ENCODE measurements at regions of chr9 and their contacts with region 1.

Region 1: GRCh38 chr9:9820436-9820835 is 792.4 kb downstream of the PTPRD start:
- DNase-seq: no peak
- ATAC-seq: no peak
- H3K4me3 ChIP-seq: no peak overlapping the region
- H3K4me3 Mint-ChIP-seq: no peak overlapping the region
- H3K27ac ChIP-seq: no peak overlapping the region
- H3K27ac Mint-ChIP-seq: no peak overlapping the region
- H3K4me1 ChIP-seq: no peaks in the 10 kb centered on the region
- H3K4me1 Mint-ChIP-seq: no peaks in the 10 kb centered on the region
- H3K27me3 ChIP-seq: no peaks in the 10 kb centered on the region
- H3K27me3 Mint-ChIP-seq: no peaks in the 10 kb centered on the region
- CTCF ChIP-seq: no peak

Region 2: DNA sequence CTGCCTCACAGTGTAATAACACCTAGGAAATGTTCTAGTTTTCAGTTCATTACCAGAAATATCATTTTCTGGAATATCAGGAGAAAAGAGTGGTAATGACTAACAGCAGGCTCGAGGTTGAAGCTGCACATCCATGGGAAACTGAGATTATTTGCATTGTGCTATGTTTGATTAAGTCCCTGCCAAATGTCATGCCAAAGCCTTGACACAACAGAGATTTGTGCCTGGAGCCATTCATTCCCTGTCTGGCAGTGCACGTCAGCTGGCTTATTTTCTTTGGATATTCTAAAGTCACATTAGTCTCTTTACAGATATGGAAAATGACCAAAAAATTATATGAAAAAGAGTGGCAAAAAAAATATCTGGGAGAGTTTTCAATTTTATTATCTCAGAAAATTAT is 55.6 kb before region 1 on chr9:
- CTCF ChIA-PET with region 1: no interaction called
- POLR2A ChIA-PET with region 1: no interaction called
- intact Hi-C with region 1: no loop called
- DNase-seq: no peak
- ATAC-seq: no peak
- H3K4me3 ChIP-seq: no peak overlapping the region
- H3K4me3 Mint-ChIP-seq: no peak overlapping the region
- H3K27ac ChIP-seq: no peak overlapping the region
- H3K27ac Mint-ChIP-seq: no peak overlapping the region
- H3K4me1 ChIP-seq: no peaks in the 10 kb centered on the region
- H3K4me1 Mint-ChIP-seq: no peaks in the 10 kb centered on the region
- H3K27me3 ChIP-seq: no peaks in the 10 kb centered on the region
- H3K27me3 Mint-ChIP-seq: no peaks in the 10 kb centered on the region
- CTCF ChIP-seq: no peak

Region 3: GRCh38 chr9:9846557-9846956 is 26.1 kb after region 1 on chr9:
- CTCF ChIA-PET with region 1: no interaction called
- POLR2A ChIA-PET with region 1: no interaction called
- intact Hi-C with region 1: no loop called
- DNase-seq: no peak
- ATAC-seq: no peak
- H3K4me3 ChIP-seq: no peak overlapping the region
- H3K4me3 Mint-ChIP-seq: no peak overlapping the region
- H3K27ac ChIP-seq: no peak overlapping the region
- H3K27ac Mint-ChIP-seq: no peak overlapping the region
- H3K4me1 ChIP-seq: no peaks in the 10 kb centered on the region
- H3K4me1 Mint-ChIP-seq: no peaks in the 10 kb centered on the region
- H3K27me3 ChIP-seq: no peaks in the 10 kb centered on the region
- H3K27me3 Mint-ChIP-seq: no peaks in the 10 kb centered on the region
- CTCF ChIP-seq: no peak

Region 4: GRCh38 chr9:9881699-9882098 is 61.3 kb after region 1 on chr9:
- CTCF ChIA-PET with region 1: no interaction called
- POLR2A ChIA-PET with region 1: no interaction called
- intact Hi-C with region 1: loop called in 1 of 2 experiments (anchors 10 kb)
- DNase-seq: no peak
- ATAC-seq: no peak
- H3K4me3 ChIP-seq: no peak overlapping the region
- H3K4me3 Mint-ChIP-seq: no peak overlapping the region
- H3K27ac ChIP-seq: no peak overlapping the region
- H3K27ac Mint-ChIP-seq: no peak overlapping the region
- H3K4me1 ChIP-seq: no peaks in the 10 kb centered on the region
- H3K4me1 Mint-ChIP-seq: no peaks in the 10 kb centered on the region
- H3K27me3 ChIP-seq: no peaks in the 10 kb centered on the region
- H3K27me3 Mint-ChIP-seq: no peaks in the 10 kb centered on the region
- CTCF ChIP-seq: no peak